Heart left ventricle (tissue), 16 donors: ENCODE measurements at regions of chr4 and their contacts with region 1.

Region 1: GRCh38 chr4:78775303-78776030 is 683 bp upstream of the BMP2K start:
- DNase-seq: peak; percentile 89 to 93 (median 90)
- ATAC-seq: peak; percentile 80 to 94 (median 92)
- H3K4me3 ChIP-seq: peak overlapping the region; percentile 29 to 94 (median 79)
- H3K27ac ChIP-seq: peak overlapping the region; percentile 92 to 100 (median 99)
- H3K4me1 ChIP-seq: peaks cover 0 to 42% (median 29%) of the 10 kb centered on the region in 12 donors
- H3K27me3 ChIP-seq: no peaks in the 10 kb centered on the region
- CTCF ChIP-seq: no peak
- POLR2A ChIP-seq: peak in 1 of 2 donors; percentile 31

Region 2: DNA sequence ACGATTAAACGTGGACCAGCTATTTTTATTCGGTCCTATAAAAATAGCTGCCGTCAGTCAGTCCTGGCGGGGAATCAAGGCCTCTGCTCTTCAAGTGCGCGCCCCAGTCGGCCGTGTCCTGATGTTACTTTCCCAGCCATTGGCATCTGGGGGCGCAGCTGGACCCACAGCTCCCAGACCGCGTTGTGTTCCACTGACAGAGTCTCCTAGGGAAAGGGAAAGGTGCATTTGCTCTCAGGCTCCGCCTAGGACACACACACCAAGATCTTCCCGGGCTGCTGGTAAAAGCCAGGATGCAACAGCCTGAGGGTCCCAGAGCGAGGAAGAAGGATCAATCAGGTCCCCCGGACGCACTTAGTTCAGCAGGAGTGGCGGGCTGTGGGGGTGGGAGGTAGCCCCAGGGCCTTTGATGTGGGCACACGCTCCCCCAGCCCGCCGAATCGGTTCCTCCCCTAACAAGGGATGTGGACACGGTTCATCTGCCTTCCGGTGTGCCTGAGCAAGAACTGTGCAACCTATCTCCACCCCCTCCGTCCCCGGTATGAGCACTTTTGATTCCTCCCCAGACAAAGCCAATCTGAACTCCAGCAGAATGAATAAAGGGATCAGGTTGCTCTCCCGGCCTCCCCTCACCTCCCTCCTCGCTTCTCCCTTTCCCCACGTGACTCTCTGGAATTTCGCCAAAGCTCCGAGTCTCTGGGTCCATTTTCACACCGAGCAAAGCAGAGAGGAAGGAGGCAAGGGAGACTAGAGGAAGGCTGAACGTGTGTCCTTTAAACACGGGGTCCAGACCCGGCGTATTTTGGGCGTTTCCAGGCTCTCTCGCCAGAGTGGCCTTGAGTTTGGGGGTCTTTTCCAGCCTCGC is 719.0 kb before region 1 on chr4:
- intact Hi-C with region 1: loop called in 1 of 10 experiments (anchors 10 kb)
- DNase-seq: peak; percentile 70 to 89 (median 82)
- ATAC-seq: peak; percentile 81 to 84 (median 82)
- H3K4me3 ChIP-seq: peak overlapping the region; percentile 49 to 82 (median 67)
- H3K27ac ChIP-seq: peak overlapping the region in 11 of 12 donors; percentile 19 to 91 (median 87)
- H3K4me1 ChIP-seq: peaks cover 0 to 29% (median 3%) of the 10 kb centered on the region in 12 donors
- H3K27me3 ChIP-seq: peaks cover 0 to 47% (median 0%) of the 10 kb centered on the region in 9 donors
- CTCF ChIP-seq: peak in 2 of 12 donors; percentile 12 to 19
- POLR2A ChIP-seq: peak in 1 of 2 donors; percentile 37

Region 3: GRCh38 chr4:78634011-78634664 is 141.3 kb before region 1 on chr4:
- intact Hi-C with region 1: loop called in 1 of 10 experiments (anchors 5 kb)
- DNase-seq: peak in 3 of 5 donors; percentile 22 to 42 (median 35)
- ATAC-seq: peak; percentile 54 to 90 (median 76)
- H3K4me3 ChIP-seq: no peak overlapping the region
- H3K27ac ChIP-seq: peak overlapping the region; percentile 1 to 74 (median 54)
- H3K4me1 ChIP-seq: peaks cover 0 to 59% (median 10%) of the 10 kb centered on the region in 12 donors
- H3K27me3 ChIP-seq: no peaks in the 10 kb centered on the region
- CTCF ChIP-seq: no peak
- POLR2A ChIP-seq: no peak

Region 4: GRCh38 chr4:78691971-78692821 is 83.3 kb before region 1 on chr4:
- intact Hi-C with region 1: loop called in 1 of 10 experiments (anchors 5 kb)
- DNase-seq: peak in 3 of 5 donors; percentile 29 to 46 (median 35)
- ATAC-seq: peak; percentile 85 to 95 (median 88)
- H3K4me3 ChIP-seq: no peak overlapping the region
- H3K27ac ChIP-seq: peak overlapping the region in 7 of 12 donors; percentile 9 to 67 (median 27)
- H3K4me1 ChIP-seq: peaks cover 0 to 26% (median 17%) of the 10 kb centered on the region in 12 donors
- H3K27me3 ChIP-seq: no peaks in the 10 kb centered on the region
- CTCF ChIP-seq: no peak
- POLR2A ChIP-seq: no peak

Region 5: DNA sequence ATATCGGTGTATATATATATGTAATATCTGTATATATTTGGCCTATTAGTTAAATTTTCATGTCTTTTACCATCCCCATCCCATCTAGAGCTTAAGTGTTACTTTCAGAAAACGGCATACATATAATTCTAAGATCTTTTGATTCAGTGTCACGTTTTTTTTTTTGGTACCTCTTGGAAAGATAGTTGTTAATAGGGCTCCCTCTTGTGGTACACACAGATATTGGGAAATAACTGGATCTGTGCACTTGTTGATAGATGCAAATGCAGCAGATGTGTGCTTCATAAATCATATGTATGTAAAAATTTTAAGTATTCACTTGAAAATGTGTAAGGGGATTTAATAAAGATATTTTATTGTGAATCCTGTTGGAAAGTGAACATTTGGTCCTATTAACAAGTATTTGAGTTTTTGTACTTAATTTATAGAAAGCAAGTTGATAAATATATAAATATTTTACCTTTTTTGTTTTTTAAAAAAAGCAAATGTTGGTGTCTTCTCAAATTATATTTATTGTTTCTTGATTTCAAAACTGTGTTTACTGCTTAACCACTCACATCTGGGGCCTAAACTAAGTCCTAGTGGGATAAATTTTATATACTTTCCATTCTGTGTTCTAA is 89.0 kb after region 1 on chr4:
- intact Hi-C with region 1: loop called in 6 of 10 experiments (anchors 5 to 10 kb)
- DNase-seq: no peak
- ATAC-seq: peak in 2 of 4 donors; percentile 72 to 78
- H3K4me3 ChIP-seq: no peak overlapping the region
- H3K27ac ChIP-seq: no peak overlapping the region
- H3K4me1 ChIP-seq: peaks cover 0 to 2% (median 0%) of the 10 kb centered on the region in 12 donors
- H3K27me3 ChIP-seq: no peaks in the 10 kb centered on the region
- CTCF ChIP-seq: peak; percentile 69 to 92 (median 82)
- POLR2A ChIP-seq: no peak

Region 6: DNA sequence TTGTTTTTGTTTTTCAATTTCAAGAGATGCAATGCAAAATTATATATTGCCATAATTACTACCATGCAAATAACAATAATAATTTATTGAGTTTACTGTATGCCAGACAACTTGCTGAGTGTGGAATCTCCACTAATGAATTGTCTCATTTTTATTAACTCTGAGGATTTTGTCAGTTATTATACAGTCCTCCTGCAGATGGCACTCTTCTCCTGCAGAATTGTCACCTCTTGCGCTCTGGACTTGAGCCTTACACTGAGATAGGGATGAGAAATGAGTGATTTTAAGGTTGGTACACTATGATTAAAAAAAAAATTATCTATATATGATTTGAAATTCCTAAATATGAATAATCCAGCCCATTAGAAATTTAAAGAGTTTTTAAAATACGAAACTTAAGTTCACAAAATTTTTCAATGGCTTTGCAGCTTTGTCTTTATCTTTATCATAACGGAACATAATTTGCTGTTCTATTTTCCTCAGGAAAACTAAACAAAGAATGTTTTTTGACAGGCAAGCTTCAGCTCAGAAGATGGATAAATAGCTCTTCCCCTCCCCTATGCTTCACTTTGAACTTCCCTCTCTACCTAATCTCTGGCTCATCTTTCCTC is 176.5 kb after region 1 on chr4:
- intact Hi-C with region 1: no loop called
- DNase-seq: peak in 1 of 5 donors; percentile 18
- ATAC-seq: peak; percentile 52 to 75 (median 68)
- H3K4me3 ChIP-seq: no peak overlapping the region
- H3K27ac ChIP-seq: no peak overlapping the region
- H3K4me1 ChIP-seq: no peaks in the 10 kb centered on the region
- H3K27me3 ChIP-seq: no peaks in the 10 kb centered on the region
- CTCF ChIP-seq: peak; percentile 54 to 85 (median 70)
- POLR2A ChIP-seq: no peak